Natural killer cell (primary cell): ENCODE measurements at regions of chrX and their contacts with region 1.

Region 1: DNA sequence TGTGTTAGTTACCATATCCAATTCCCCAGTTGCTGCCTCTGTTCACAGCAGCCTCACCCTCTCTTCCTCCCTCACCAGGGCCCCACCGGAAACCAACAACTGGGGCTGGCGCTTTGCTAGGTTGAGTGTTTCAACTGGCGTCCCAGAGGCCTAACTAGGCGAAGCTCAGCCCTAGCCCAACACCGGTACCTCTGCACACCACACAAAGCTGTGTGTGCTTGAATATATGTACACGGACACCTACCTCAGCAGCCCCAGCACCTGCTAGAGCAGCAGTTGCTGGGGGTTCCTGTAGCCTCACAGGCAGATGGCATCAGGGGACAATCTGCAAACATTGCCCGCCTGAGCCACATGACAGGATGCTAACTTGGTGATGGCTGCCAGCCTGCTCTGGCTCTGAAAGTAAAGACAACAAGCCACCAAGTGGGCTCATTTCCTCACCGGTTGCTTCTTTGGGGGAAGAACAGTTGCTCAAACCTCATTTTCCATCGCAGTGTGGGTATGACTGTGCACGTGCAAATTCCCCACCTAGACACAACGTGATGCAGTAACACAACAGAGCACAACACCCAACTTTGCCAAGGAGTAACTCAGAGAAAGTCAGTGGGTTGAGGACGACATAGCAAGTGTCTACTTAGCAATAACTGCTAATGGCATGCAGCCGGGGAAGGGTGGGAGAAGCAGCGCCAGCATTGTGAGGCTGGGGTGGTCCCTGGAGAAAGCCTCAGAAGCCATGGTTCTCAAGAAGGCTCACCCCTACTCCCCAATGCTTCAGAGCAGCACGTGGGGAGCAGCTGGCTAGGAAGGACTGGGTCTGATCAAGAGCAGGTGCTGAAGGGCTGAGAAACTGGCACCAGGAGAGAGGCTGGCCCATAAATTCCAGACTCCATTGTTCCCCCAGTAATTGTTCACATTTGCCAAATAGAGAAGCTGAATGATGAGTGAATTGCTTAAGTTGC is 139.5 kb downstream of the SH3KBP1 start:
- DNase-seq: peak; percentile 58 to 85
- ATAC-seq: peak; percentile 62 to 86 (median 81)
- H3K4me3 ChIP-seq: no peak overlapping the region
- H3K4me3 Mint-ChIP-seq: peak overlapping the region; percentile 54
- H3K27ac ChIP-seq: peak overlapping the region; percentile 88
- H3K27ac Mint-ChIP-seq: peak overlapping the region; percentile 84 to 98
- H3K4me1 ChIP-seq: peaks cover 70% of the 10 kb centered on the region
- H3K4me1 Mint-ChIP-seq: peaks cover 73 to 88% of the 10 kb centered on the region in 2 donors
- H3K27me3 ChIP-seq: no peaks in the 10 kb centered on the region
- H3K27me3 Mint-ChIP-seq: no peaks in the 10 kb centered on the region
- CTCF ChIP-seq: no peak

Region 2: DNA sequence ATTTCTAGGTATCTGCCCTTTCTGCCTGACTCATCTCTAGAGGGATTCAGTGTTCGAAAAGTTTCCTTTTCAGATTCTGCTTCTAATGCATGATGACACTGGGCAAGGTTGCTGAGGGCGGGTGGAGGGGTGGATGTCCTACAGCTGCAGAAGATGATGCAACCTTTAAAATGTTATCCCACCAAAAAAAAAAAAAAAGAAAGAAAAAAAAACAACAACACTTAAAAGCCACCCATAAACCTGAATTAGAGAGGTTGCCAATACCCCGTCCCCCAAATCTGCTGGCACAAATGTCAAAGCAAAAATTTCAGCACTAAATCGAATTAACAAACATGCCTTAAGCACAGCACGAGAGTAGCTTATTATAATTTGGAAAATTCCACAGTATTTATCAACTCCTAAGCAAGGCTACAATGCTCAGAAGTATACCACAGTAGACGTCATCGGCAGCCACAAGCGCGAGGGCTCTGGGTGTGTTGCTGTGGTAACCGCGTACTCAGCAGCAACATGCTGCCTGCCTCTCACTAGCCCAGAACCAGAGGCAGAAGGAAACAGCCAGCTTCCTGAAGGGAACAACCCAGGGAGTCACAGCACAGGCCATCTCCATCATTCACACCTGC is 65.1 kb before region 1 on chrX:
- intact Hi-C with region 1: loop called (anchors 5 kb)
- DNase-seq: peak; percentile 73 to 92
- ATAC-seq: peak; percentile 74 to 91 (median 89)
- H3K4me3 ChIP-seq: no peak overlapping the region
- H3K4me3 Mint-ChIP-seq: peak overlapping the region; percentile 60
- H3K27ac ChIP-seq: peak overlapping the region; percentile 87
- H3K27ac Mint-ChIP-seq: peak overlapping the region; percentile 85 to 98
- H3K4me1 ChIP-seq: peaks cover 44% of the 10 kb centered on the region
- H3K4me1 Mint-ChIP-seq: peaks cover 53 to 67% of the 10 kb centered on the region in 2 donors
- H3K27me3 ChIP-seq: no peaks in the 10 kb centered on the region
- H3K27me3 Mint-ChIP-seq: peaks cover 0 to 6% of the 10 kb centered on the region in 2 donors
- CTCF ChIP-seq: no peak

Region 3: GRCh38 chrX:19799319-19800182 is 51.6 kb after region 1 on chrX:
- intact Hi-C with region 1: loop called (anchors 5 kb)
- DNase-seq: peak in 1 of 2 donors; percentile 74
- ATAC-seq: peak; percentile 76 to 83 (median 79)
- H3K4me3 ChIP-seq: peak overlapping the region; percentile 32
- H3K4me3 Mint-ChIP-seq: peak overlapping the region; percentile 93
- H3K27ac ChIP-seq: peak overlapping the region; percentile 65
- H3K27ac Mint-ChIP-seq: peak overlapping the region; percentile 86 to 95
- H3K4me1 ChIP-seq: peaks cover 59% of the 10 kb centered on the region
- H3K4me1 Mint-ChIP-seq: peaks cover 61 to 68% of the 10 kb centered on the region in 2 donors
- H3K27me3 ChIP-seq: no peaks in the 10 kb centered on the region
- H3K27me3 Mint-ChIP-seq: peaks cover 0 to 6% of the 10 kb centered on the region in 2 donors
- CTCF ChIP-seq: no peak

Region 4: DNA sequence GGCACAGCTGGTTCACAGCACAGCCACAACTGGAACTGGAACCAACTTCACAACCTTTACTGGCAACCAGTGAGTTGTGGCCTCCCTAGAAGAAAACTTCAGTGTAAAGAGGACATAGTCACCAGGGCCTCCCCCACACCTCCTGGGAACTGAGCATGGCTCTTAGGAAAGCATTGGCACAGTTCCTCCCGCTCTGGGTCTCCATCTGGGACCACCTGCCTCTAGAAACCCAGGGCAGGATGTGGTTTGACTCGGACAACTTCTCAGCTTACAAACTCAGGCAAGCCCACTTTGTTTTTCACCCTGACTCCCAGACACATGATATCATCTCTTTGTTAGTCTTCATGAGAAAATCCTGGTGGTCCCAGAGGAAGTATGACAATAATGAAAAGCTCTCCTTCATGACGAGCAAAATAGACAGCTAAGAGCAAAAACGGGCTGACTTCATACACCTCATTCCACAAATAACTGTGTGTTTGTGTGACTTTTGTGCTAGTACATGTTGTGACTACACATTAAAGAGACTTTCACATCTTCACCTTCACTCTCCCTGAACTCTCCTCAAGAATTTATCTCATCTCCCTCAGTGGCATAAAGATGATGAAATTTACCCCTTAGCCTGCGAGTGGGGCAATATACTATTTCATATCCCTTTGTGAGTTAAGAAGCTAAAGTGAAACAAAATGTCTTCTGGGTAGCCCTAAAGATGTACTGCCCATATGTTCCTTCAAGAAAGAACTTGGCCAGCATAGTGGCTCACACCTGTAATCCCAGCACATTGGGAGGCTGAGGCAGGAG is 64.1 kb after region 1 on chrX:
- intact Hi-C with region 1: loop called (anchors 5 kb)
- DNase-seq: no peak
- ATAC-seq: peak in 2 of 3 donors; percentile 39 to 45
- H3K4me3 ChIP-seq: no peak overlapping the region
- H3K4me3 Mint-ChIP-seq: peak overlapping the region; percentile 68
- H3K27ac ChIP-seq: peak overlapping the region; percentile 63
- H3K27ac Mint-ChIP-seq: peak overlapping the region; percentile 82 to 88
- H3K4me1 ChIP-seq: peaks cover 55% of the 10 kb centered on the region
- H3K4me1 Mint-ChIP-seq: peaks cover 55 to 66% of the 10 kb centered on the region in 2 donors
- H3K27me3 ChIP-seq: no peaks in the 10 kb centered on the region
- H3K27me3 Mint-ChIP-seq: no peaks in the 10 kb centered on the region
- CTCF ChIP-seq: no peak

Region 5: GRCh38 chrX:19840899-19841648 is 93.1 kb after region 1 on chrX:
- intact Hi-C with region 1: loop called (anchors 5 kb)
- DNase-seq: peak; percentile 44 to 74
- ATAC-seq: peak; percentile 68 to 84 (median 82)
- H3K4me3 ChIP-seq: no peak overlapping the region
- H3K4me3 Mint-ChIP-seq: peak overlapping the region; percentile 67
- H3K27ac ChIP-seq: peak overlapping the region; percentile 39
- H3K27ac Mint-ChIP-seq: peak overlapping the region; percentile 89 to 94
- H3K4me1 ChIP-seq: peaks cover 54% of the 10 kb centered on the region
- H3K4me1 Mint-ChIP-seq: peaks cover 43 to 45% of the 10 kb centered on the region in 2 donors
- H3K27me3 ChIP-seq: no peaks in the 10 kb centered on the region
- H3K27me3 Mint-ChIP-seq: no peaks in the 10 kb centered on the region
- CTCF ChIP-seq: no peak